ENCODE measurements at regions of chr9 and their contacts with region 1.

Region 1: GRCh38 chr9:32378993-32379729 is 5.3 kb upstream of the ACO1 start:
- DNase-seq: peak; percentile 69
- H3K4me3 ChIP-seq: peak overlapping the region in 1 of 2 experiments; percentile 40; a peak in 1 of 4 replicates
- H3K27ac ChIP-seq: no peak overlapping the region
- H3K4me1 ChIP-seq: peaks cover 4% of the 10 kb centered on the region in 2 experiments; a peak in 2 of 4 replicates
- H3K27me3 ChIP-seq: no peaks in the 10 kb centered on the region
- CTCF ChIP-seq: peak; percentile 88
- EP300 ChIP-seq: no peak
- RAD21 ChIP-seq: peak; percentile 94

Region 2: DNA sequence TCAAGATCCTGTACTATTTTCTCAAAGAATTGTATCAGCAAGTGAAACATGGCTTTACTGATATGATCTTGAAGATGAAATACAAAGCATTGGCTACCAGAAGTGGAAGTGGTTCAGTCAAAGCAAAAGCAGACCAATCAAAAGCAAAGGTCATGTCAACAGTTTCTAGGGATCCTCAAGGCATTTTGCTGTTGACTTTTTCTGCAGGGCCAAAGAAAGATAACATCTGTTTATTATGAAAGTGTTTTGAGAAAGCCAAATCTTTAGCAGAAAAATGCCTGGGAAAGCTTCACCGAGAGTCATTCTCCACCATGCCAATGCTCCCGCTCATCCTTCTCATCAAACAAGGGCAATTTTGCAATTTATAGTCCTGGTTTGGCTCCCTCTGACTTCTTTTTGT is 85.1 kb before region 1 on chr9:
- CTCF ChIA-PET with region 1: no interaction called
- POLR2A ChIA-PET with region 1: no interaction called
- DNase-seq: no peak
- H3K4me3 ChIP-seq: no peak overlapping the region
- H3K27ac ChIP-seq: no peak overlapping the region
- H3K4me1 ChIP-seq: no peaks in the 10 kb centered on the region
- H3K27me3 ChIP-seq: no peaks in the 10 kb centered on the region
- CTCF ChIP-seq: no peak
- EP300 ChIP-seq: no peak
- RAD21 ChIP-seq: no peak

Region 3: DNA sequence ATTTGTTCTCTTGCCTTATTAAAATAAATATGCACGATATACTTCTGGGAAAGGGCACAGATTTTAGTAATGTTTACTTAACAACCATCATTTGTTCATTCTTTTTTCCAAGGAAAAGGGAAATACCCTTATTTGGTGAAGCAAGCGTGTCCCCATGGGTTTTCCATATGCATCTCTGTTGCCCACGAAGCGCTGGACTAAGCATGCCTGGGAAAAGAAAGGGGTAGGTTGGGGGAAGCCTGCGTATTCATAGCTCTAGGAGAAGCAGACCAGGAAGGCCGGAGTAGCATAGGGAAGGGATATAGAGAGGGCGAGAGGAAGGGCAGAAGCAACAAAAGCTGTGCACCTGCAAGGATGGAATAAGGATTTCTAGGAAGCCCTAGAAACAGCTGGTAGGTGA is 56.5 kb before region 1 on chr9:
- CTCF ChIA-PET with region 1: no interaction called
- POLR2A ChIA-PET with region 1: no interaction called
- DNase-seq: no peak
- H3K4me3 ChIP-seq: no peak overlapping the region
- H3K27ac ChIP-seq: no peak overlapping the region
- H3K4me1 ChIP-seq: no peaks in the 10 kb centered on the region
- H3K27me3 ChIP-seq: no peaks in the 10 kb centered on the region; the same call in 1 of the 2 replicates
- CTCF ChIP-seq: no peak
- EP300 ChIP-seq: no peak
- RAD21 ChIP-seq: no peak

Region 4: DNA sequence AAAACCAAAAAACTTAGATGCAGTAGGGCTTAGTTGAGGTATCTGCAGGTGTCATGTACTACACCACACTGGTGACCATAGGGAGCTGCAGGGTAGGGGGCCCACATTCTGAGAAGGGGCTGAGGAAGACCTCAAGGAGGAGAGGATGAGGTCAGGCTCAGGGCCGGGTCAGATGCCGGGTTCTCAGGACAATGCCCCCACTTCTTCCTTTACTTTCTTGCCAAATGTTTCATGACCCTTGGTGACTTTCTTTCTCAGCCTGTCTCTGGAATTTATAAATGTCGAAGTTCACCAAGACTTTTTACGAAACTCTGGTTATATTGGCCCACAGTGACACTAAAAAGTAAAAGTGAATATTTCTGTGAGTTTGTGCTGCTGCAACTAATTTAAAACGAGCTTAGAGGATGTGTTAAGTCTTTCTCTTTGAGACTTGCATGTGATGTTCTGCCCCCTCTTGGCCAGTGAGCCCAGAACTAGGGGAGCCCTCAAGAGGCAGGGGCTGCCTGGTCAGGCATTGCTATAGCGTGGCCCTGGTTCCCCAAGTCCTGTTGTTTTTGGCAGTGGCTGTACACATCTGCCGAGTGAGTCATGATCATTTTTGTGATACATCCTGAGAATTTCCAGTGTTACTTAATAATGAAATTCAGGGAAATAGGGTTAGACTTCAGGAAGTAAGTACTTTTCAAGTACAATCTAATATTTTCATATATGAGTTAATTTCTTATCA is 16.5 kb after region 1 on chr9:
- CTCF ChIA-PET with region 1: interaction called, 47 read pairs
- POLR2A ChIA-PET with region 1: interaction called, 5 read pairs
- DNase-seq: peak; percentile 20
- H3K4me3 ChIP-seq: no peak overlapping the region
- H3K27ac ChIP-seq: peak overlapping the region in 1 of 2 experiments; percentile 47; a peak in 1 of 4 replicates
- H3K4me1 ChIP-seq: peaks cover 2 to 3% of the 10 kb centered on the region in 2 experiments; a peak in 1 of 4 replicates
- H3K27me3 ChIP-seq: no peaks in the 10 kb centered on the region
- CTCF ChIP-seq: peak; percentile 51; the same call in 1 of the 2 replicates
- EP300 ChIP-seq: peak in 1 of 2 experiments; percentile 27; a peak in 1 of 4 replicates
- RAD21 ChIP-seq: no peak

Region 5: GRCh38 chr9:32449969-32450368 is 70.8 kb after region 1 on chr9:
- CTCF ChIA-PET with region 1: interaction called, 27 read pairs
- POLR2A ChIA-PET with region 1: no interaction called
- DNase-seq: no peak
- H3K4me3 ChIP-seq: no peak overlapping the region
- H3K27ac ChIP-seq: no peak overlapping the region
- H3K4me1 ChIP-seq: peaks cover 0 to 8% of the 10 kb centered on the region in 2 experiments; a peak in 1 of 4 replicates
- H3K27me3 ChIP-seq: no peaks in the 10 kb centered on the region
- CTCF ChIP-seq: no peak
- EP300 ChIP-seq: no peak
- RAD21 ChIP-seq: no peak

Region 6: GRCh38 chr9:32533336-32533735 is 154.2 kb after region 1 on chr9:
- CTCF ChIA-PET with region 1: interaction called, 127 read pairs
- POLR2A ChIA-PET with region 1: no interaction called
- DNase-seq: no peak
- H3K4me3 ChIP-seq: no peak overlapping the region
- H3K27ac ChIP-seq: no peak overlapping the region
- H3K4me1 ChIP-seq: no peaks in the 10 kb centered on the region
- H3K27me3 ChIP-seq: no peaks in the 10 kb centered on the region
- CTCF ChIP-seq: no peak
- EP300 ChIP-seq: no peak
- RAD21 ChIP-seq: no peak

Region 7: GRCh38 chr9:32558408-32558934 is 179.3 kb after region 1 on chr9:
- CTCF ChIA-PET with region 1: interaction called, 71 read pairs
- POLR2A ChIA-PET with region 1: interaction called, 4 read pairs
- DNase-seq: no peak
- H3K4me3 ChIP-seq: no peak overlapping the region
- H3K27ac ChIP-seq: no peak overlapping the region
- H3K4me1 ChIP-seq: no peaks in the 10 kb centered on the region; a peak in 2 of 4 replicates
- H3K27me3 ChIP-seq: no peaks in the 10 kb centered on the region
- CTCF ChIP-seq: no peak
- EP300 ChIP-seq: no peak
- RAD21 ChIP-seq: no peak

Region 8: GRCh38 chr9:32579706-32580331 is 200.7 kb after region 1 on chr9:
- CTCF ChIA-PET with region 1: interaction called, 620 read pairs
- POLR2A ChIA-PET with region 1: interaction called, 10 read pairs
- DNase-seq: peak; percentile 45
- H3K4me3 ChIP-seq: no peak overlapping the region
- H3K27ac ChIP-seq: no peak overlapping the region
- H3K4me1 ChIP-seq: no peaks in the 10 kb centered on the region; a peak in 1 of 4 replicates
- H3K27me3 ChIP-seq: no peaks in the 10 kb centered on the region
- CTCF ChIP-seq: peak; percentile 98
- EP300 ChIP-seq: no peak
- RAD21 ChIP-seq: peak; percentile 82